ENCODE measurements at regions of chr1 and their contacts with region 1.

Region 1: GRCh38 chr1:2233997-2234761 is 6.1 kb downstream of the SKI start:
- DNase-seq: peak; percentile 88
- ATAC-seq: peak; percentile 82
- H3K4me3 Mint-ChIP-seq: peak overlapping the region; percentile 73
- H3K27ac Mint-ChIP-seq: peak overlapping the region; percentile 92
- H3K4me1 Mint-ChIP-seq: peaks cover 60% of the 10 kb centered on the region
- H3K27me3 Mint-ChIP-seq: no peaks in the 10 kb centered on the region
- CTCF ChIP-seq: no peak

Region 2: GRCh38 chr1:2255420-2256369 is 21.5 kb after region 1 on chr1:
- CTCF ChIA-PET with region 1: interaction called, 5 read pairs
- POLR2A ChIA-PET with region 1: interaction called, 12 read pairs
- intact Hi-C with region 1: no loop called
- DNase-seq: peak; percentile 93
- ATAC-seq: peak; percentile 72
- H3K4me3 Mint-ChIP-seq: no peak overlapping the region
- H3K27ac Mint-ChIP-seq: no peak overlapping the region
- H3K4me1 Mint-ChIP-seq: peaks cover 47% of the 10 kb centered on the region
- H3K27me3 Mint-ChIP-seq: no peaks in the 10 kb centered on the region
- CTCF ChIP-seq: no peak

Region 3: GRCh38 chr1:2290595-2291510 is 56.7 kb after region 1 on chr1:
- CTCF ChIA-PET with region 1: interaction called, 8 read pairs
- POLR2A ChIA-PET with region 1: interaction called, 5 read pairs
- intact Hi-C with region 1: loop called (anchors 5 kb)
- DNase-seq: peak; percentile 98
- ATAC-seq: peak; percentile 92
- H3K4me3 Mint-ChIP-seq: peak overlapping the region; percentile 76
- H3K27ac Mint-ChIP-seq: peak overlapping the region; percentile 95
- H3K4me1 Mint-ChIP-seq: peaks cover 78% of the 10 kb centered on the region
- H3K27me3 Mint-ChIP-seq: no peaks in the 10 kb centered on the region
- CTCF ChIP-seq: no peak

Region 4: DNA sequence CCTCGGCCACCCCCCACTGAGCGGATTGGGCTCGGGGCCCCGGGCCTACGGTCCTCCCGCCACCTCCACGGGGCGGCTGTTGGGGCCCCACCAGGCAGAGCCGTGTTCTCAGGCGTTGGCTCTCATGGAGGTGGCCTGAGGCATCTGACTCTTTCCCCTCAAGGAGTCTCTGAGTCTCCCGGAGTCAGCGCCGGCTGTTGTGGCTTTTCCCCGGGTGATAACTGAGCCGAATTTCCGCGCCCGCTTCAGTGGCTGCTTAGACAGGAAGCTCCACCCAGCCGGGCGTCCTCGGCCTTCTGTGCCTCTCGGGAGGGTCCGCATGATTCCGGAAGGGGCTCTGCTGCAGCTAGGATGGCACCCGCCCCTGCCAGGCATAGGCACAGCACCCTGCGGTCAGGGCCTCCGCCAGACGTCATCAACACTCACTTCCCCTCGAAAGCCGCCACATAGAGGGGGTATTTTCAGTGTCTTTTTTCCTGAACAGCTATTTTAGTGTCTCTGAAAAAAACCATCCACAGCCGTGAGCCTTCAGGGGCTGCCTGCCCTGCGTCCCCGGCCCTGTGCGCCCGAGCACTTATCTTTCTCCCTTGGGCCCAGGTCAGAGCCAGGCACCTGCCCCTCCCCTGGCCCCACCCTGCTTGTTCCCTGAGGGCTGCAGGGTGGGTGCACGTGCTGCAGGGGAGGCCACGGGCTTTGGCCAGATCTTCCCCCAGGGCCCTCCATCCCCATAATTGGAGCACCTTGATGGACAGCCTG is 66.8 kb after region 1 on chr1:
- CTCF ChIA-PET with region 1: interaction called, 6 read pairs
- POLR2A ChIA-PET with region 1: interaction called, 18 read pairs
- intact Hi-C with region 1: no loop called
- DNase-seq: peak; percentile 98
- ATAC-seq: peak; percentile 83
- H3K4me3 Mint-ChIP-seq: peak overlapping the region; percentile 81
- H3K27ac Mint-ChIP-seq: peak overlapping the region; percentile 99
- H3K4me1 Mint-ChIP-seq: peaks cover 55% of the 10 kb centered on the region
- H3K27me3 Mint-ChIP-seq: no peaks in the 10 kb centered on the region
- CTCF ChIP-seq: no peak

Region 5: DNA sequence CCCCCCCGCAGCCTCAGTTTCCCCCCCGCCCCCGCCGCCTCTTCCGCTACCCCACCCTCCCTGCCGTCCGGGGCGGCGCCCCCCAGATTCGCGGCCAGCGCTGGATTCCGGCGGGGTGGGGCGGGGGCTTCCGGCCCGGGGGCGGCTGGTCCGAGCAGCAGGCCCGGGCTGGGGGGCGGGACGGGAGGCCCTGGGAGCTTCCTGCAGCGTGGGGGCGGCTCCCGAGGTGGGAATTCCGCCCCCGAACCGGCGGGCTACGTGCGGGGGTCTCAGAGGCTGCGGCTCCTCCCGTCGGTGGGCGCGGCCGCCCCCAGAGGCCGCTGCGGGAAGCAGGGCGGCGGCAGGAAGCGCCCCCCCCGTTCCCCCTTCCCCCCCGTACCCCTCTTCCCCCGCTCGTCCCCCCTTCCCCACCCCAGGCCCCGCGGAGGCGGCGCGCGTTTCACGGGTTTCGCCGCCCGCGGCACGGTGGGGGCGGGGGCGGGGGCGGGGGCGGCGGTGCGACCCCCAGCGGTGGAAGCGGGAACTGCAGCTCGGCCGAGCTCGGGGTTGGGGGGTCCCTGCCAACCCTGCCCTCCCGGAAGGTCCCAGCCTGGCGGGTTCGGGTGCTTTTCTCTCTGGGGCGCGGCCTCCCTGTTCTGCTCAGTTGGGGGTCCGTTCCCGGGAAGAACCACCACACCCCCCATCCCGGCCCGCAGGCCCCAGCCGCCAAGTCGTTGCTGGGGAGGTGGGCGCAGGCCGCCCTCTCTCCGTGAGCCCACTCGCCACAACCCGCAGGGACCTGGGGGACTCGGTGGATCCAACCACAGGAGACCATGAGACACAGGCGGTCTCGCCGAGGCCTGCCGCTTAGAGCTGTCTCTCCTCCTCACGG is 80.9 kb after region 1 on chr1:
- CTCF ChIA-PET with region 1: interaction called, 7 read pairs
- POLR2A ChIA-PET with region 1: interaction called, 10 read pairs
- intact Hi-C with region 1: no loop called
- DNase-seq: peak; percentile 56
- ATAC-seq: peak; percentile 46
- H3K4me3 Mint-ChIP-seq: peak overlapping the region; percentile 15
- H3K27ac Mint-ChIP-seq: no peak overlapping the region
- H3K4me1 Mint-ChIP-seq: peaks cover 20% of the 10 kb centered on the region
- H3K27me3 Mint-ChIP-seq: no peaks in the 10 kb centered on the region
- CTCF ChIP-seq: peak; percentile 99

Region 6: DNA sequence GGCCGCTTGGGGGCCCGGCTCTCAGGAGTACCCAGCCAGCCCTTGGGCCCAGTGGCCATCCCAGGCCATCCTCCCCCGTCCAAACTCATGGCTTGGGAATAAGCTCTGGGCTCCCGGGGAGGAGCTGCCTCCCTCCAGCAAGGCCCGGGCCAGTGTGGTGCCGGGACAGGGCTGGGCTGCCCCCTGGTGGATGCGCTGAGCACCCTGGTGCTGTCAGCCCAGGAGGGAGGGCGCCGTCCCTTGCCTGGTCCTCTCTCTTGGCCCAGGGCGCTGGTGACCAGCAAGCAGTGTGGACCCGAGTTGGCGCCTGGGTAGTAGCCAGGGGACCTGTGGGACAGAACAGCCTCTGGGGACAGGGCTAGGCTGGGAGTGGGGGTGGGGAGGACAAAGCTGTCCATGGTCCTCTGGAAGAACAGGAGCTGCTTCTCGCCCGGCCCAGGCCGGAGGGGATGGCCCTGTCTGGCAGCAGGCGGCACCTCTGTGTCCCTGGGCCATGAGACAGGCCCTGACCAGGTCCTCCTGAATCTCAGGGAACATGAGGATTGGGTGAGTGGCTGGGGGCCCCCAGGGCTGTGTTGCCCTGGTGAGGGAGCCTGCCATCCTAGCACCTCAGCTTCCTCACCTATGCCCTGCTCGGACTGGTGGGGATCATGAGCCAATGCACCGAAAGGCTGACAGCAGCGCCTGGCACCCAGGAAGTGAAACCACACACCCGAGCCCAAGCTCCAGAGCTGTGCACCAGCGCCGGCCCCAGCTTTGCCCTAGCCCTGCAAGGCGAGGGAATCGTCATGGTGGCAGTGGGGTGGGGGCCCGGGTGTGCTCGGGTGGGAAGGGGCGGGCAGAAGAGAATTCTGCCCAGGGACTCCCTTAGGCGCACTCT is 147.8 kb after region 1 on chr1:
- CTCF ChIA-PET with region 1: interaction called, 16 read pairs
- POLR2A ChIA-PET with region 1: interaction called, 8 read pairs
- intact Hi-C with region 1: no loop called
- DNase-seq: peak; percentile 81
- ATAC-seq: peak; percentile 99
- H3K4me3 Mint-ChIP-seq: no peak overlapping the region
- H3K27ac Mint-ChIP-seq: no peak overlapping the region
- H3K4me1 Mint-ChIP-seq: no peaks in the 10 kb centered on the region
- H3K27me3 Mint-ChIP-seq: no peaks in the 10 kb centered on the region
- CTCF ChIP-seq: peak; percentile 94

Measured in activated CD8-positive, alpha-beta T cell treated with anti-CD3 and anti-CD28 coated beads for 36 hours (primary cell).